Posterior cingulate gyrus (tissue), 11 donors: ENCODE measurements at regions of chr5 and their contacts with region 1.

Region 1: DNA sequence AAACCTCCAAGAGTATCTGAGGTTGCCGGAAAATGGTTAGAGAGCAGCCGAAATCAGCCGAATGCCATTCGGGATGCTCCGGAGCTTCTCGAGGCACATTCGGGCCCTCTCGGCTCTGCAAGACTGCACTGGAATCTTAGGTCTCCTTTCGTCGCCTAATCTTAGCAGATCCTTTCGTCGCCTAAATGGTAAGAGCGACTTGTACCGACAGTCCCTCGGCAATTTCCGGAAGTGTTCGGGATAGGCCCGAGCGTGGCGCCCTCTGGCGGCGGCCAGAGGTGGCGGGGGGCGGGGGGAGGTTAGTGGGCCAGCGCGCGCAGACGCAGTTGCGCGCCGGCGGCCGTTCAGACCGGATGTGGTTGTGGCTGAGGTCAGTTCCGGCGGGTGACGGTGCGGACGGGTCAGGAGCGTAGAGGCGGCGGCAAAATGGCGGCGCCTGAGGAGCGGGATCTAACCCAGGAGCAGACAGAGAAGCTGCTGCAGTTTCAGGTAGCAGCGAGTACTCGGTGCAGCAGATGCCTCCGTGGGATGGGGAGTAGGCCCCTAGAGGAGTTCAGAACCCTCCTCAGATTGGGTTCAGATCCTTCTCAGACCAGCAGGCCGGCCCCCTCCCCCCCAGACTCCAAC is at the start of gene FAF2:
- DNase-seq: peak; percentile 93 to 99 (median 95)

Region 2: DNA sequence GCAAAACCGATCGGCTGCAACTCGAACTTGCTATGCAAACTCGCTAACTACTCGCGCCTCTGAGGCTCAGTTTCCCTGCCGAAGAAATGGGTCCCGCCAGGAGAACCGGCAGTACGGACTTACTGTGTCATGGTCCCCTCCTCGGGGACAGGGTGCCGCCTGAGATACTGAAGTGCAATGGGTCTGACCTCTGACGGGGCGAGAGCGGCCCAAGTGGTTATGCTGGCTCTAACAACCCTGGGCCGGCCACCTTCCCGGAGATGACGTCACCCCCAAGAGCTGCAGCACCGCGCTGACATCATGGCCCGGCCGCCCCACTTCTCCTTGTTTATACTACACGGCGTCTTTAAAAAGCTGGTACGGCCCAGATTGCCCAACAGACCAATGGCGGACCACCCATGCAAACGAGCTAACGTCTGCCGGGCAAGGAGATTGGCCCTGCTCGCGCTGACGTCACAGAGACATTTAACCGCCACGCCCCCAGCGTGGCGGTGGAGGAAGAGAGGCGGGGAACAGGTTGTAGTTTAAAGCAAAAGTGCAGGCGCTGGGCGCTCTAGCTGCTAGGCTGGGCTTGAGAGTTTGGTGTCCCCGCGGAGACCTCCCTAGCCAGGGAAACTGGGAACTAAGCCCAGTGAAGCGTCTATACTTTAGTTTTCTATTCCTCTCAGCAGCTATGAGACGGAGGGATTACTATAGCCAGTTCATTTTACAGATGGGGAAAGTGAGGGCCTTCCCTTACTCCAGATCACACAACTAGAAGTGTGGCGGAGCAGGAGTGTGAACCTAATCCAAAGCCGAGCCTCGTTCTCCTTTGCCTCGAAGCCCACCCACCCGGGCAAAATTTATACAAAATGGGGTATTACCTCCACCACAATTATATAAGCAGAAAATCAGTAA is 89.8 kb after region 1 on chr5:
- intact Hi-C with region 1: loop called (anchors 1 kb)
- DNase-seq: peak; percentile 97 to 100 (median 99)